ENCODE measurements at regions of chr2 and their contacts with region 1.

Region 1: DNA sequence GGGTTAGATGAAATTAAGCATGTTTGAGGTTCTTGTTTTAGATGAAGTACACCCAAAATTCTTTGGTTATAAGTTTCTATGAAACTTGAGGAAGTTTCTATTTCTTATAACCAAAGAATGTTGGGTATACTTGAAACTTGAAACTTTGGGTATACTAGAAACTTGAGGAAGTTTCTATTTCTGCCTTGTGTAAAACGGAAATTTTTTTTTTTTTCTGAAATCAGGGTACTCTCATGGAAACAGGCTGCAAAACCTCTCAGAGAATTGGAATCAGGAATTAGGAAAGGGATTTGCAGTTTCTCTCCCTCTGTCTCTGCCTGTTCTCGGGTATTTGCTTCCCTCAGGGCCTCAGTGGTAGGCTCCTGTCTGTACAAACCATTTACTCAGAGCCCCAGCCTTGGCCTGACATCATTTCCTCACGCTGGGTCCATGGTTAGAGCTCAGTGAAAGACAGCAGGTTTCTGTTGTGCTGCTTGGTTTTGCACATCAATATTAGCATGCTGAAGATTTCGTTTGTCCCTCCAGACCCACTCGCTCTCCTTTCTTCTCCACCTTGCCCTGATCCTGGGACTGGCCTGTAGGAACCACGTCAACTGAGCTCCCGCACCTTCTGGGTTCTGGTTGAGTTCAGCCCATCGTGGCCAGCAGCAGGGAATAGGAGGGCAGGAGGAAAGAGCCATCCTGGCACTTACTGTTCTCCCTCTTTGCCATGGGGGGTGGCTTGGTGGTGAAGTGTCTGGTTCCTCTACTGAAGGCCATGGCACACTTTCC is 106.4 kb downstream of the POLR1A start:
- DNase-seq: no peak
- H3K4me3 ChIP-seq: no peak overlapping the region
- H3K27ac ChIP-seq: peak overlapping the region; percentile 95 to 99 (median 98)
- H3K4me1 ChIP-seq: peaks cover 55 to 69% of the 10 kb centered on the region in 2 donors
- H3K27me3 ChIP-seq: no peaks in the 10 kb centered on the region
- CTCF ChIP-seq: no peak
- POLR2A ChIP-seq: no peak

Region 2: DNA sequence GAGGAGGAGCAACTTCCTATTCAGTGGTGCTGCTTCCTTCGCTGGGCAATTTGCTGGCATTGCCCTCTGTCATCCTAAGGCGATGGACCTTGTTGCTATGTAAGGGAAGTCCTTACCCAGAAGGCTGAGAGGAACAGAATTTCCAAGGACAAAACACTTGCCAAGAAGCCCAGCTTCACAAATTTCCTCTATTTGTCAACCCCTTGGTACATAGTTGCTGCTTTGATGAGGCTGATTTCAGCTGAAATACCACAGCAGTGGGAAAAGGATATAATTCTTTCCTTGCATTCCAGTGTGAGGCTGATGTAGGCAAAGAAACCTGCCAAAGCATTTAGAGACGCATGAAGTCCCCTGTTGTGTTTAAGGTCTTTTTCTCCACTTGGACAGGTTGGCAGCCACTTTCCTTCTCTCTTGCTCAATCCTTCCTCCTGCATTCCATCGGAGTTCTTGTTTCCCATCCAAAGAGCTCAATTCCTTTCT is 94.0 kb before region 1 on chr2:
- intact Hi-C with region 1: loop called (anchors 10 kb)
- DNase-seq: peak; percentile 77 to 78
- H3K4me3 ChIP-seq: no peak overlapping the region
- H3K27ac ChIP-seq: peak overlapping the region; percentile 92 to 96 (median 94)
- H3K4me1 ChIP-seq: peaks cover 43 to 76% of the 10 kb centered on the region in 2 donors
- H3K27me3 ChIP-seq: no peaks in the 10 kb centered on the region
- CTCF ChIP-seq: no peak
- POLR2A ChIP-seq: peak in 1 of 2 donors; percentile 61

Region 3: DNA sequence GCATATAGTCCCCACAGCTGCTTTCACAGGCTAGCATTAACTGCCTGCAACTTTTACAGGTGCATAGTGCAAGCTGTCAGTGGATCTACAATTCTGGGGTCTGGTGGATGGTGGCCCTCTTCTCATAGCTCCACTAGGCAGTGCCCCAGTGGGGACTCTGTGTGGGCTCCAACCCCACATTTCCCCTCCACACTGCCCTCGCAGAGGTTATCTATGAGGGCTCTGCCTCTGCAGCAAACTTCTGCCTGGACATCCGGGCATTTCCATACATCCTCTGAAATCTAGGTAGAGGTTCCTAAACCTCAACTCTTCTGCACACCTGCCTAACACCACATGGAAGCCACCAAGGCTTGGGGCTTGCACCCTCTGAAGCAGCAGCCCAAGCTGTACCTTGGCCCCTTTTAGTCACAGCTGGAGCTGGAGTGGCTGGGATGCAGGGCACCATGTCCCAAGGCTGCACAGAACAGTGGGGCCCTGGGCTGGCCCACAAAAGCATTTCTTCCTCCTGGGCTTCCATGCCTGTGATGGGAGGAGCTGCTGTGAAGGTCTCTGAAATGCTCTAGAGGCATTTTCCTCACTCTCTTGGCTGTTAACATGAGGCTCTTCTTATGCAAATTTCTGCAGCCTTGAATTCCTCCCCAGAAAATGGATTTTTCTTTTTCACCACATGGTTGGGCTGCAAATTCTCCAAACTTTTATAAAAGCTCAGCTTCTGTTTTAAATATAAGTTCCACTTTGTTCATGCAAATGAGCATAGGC is 501.3 kb after region 1 on chr2:
- intact Hi-C with region 1: no loop called
- DNase-seq: no peak
- H3K4me3 ChIP-seq: no peak overlapping the region
- H3K27ac ChIP-seq: no peak overlapping the region
- H3K4me1 ChIP-seq: no peaks in the 10 kb centered on the region
- H3K27me3 ChIP-seq: no peaks in the 10 kb centered on the region
- CTCF ChIP-seq: no peak
- POLR2A ChIP-seq: no peak